Posterior cingulate gyrus (tissue), 11 donors: ENCODE measurements at regions of chr13 and their contacts with region 1.

Region 1: DNA sequence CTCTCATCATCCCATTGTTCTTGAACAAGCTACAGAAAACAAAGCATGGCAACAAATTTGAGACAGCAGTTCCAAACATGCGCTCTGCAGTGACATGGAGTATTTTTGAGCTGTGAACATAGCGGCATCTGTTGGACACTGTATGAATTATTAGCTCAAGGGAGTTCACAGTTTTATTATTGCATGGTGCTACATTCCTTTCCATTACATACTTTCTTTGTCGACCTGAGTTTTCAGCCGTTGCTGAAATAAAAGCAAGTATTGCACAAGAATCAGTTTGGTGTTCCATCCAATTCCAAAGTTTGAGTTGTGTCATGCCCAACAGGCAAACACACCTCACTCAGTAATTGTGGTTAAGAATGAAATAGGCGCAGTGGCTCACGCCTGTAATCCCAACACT is 30.1 kb upstream of the METTL21C start:
- DNase-seq: peak in 1 of 10 donors; percentile 40

Region 2: DNA sequence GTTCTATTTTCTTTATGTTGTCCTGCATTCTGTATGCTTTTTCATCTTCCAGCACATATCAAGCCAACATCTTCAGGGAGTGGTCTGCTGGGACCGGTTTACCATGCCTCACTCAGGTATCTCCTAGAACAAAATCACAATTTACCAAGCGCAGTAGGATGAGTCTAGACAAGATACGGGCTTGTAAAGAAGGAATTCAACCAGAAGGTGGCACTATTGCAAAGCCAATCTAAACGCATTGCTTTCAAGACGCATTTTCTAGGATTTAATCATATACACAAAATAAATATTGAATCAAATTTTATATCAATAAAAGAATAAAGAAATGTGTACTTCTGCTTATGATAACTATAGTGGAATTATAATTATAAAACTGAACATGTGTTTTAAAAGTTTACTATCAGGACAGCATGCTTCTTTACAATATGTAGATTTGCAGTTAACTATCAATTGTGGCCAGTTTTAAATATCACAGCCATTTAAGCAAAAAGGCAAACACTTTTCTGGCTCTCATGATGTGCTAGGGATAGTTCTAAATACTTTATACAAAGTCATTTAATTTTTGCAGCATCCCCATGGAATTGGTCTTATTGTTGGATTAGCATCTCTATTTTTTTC is 144.3 kb before region 1 on chr13:
- intact Hi-C with region 1: loop called (anchors 5 kb)
- DNase-seq: peak in 1 of 10 donors; percentile 20

Region 3: GRCh38 chr13:102812611-102813287 is 87.8 kb after region 1 on chr13:
- intact Hi-C with region 1: no loop called
- DNase-seq: no peak

Region 4: GRCh38 chr13:102999499-102999898 is 274.6 kb after region 1 on chr13:
- intact Hi-C with region 1: no loop called
- DNase-seq: no peak